Calu3 (cell line): ENCODE measurements at regions of chr13 and their contacts with region 1.

Region 1: DNA sequence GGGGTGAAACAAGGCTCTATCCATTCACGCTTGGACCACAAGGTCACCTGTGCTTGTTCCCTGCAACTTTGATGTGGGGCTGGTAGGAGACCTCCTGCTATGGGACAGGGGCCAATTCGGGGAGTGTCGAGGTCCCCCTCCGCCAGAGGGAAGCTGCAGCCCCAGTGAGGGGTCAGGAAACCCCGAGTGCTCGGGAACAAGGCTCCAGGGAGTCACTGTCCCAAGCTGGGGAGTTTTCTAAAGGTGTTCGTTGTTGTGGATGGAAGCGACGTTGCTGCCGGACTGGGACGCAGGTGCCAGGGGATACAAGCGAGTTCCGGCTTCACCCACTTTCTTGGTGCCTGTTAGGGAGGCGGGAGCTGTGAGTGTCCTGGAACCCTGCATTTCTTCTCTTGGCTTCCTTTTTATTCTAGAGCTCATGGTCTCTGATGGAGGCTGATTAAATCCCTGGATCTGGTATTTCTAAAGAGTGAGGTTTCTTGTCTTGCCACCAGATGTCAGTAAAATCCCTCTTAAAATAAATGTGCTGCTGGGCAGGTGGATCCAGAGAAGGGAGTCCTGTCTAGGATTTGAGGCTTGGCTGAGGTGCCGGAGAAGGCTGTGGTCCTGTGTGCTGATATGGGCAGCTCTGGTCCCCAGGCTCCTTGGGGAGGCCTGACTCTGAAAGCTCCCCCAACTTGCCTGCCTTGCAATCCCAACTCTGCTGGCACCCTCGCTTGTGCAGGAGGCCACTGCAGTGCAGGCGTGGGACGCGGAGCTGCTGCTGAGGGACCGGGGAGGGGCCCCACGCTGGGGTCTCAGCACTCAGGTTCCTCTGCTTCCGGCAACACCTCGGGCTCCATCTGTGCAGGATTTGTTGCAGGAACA is 153.9 kb downstream of the TEX29 start:
- DNase-seq: no peak
- H3K4me3 Mint-ChIP-seq: no peak overlapping the region
- H3K27ac Mint-ChIP-seq: no peak overlapping the region
- H3K4me1 Mint-ChIP-seq: no peaks in the 10 kb centered on the region
- H3K27me3 Mint-ChIP-seq: peaks cover 14% of the 10 kb centered on the region
- CTCF ChIP-seq: no peak

Region 2: DNA sequence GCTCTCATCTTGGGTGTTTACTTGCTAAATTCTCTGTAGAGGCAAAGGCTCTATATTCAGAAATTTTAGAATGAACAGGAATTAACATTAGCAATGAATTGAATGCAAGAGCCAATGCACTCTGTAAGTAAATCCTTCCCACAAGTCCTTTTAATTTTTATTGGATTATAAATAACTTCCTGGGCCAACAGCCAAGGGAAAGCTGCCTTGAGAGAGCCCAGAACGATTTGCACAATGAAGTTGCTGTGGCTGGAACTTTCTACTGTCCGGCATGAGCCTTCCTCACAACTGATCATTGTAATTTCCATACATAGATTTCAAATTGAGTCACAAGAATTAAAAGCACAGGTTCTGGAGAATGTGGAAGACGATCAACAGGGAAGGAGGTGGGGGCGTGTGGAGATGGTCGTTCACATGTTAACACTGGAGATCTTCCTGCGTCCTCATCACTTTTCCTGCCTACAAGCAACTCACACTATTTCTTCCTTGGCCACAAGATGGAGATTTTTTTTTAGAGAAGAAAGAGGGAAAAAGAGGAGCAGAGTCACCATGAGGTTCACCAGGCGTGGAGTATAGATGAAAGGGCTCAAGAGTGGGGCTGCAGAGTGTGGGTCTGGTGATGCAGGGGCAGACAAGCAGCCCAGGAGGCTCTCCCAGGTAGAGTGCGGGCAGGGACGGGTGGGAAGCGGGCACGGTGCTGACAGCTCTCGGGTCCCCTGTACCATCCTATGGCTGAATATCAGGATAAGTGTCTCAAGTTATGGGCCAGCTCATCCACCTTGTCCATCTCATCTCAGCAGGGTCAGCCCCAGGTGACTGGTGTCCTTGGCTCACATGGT is 703.3 kb after region 1 on chr13:
- CTCF ChIA-PET with region 1: no interaction called
- intact Hi-C with region 1: no loop called
- DNase-seq: no peak
- H3K4me3 Mint-ChIP-seq: no peak overlapping the region
- H3K27ac Mint-ChIP-seq: no peak overlapping the region
- H3K4me1 Mint-ChIP-seq: no peaks in the 10 kb centered on the region
- H3K27me3 Mint-ChIP-seq: no peaks in the 10 kb centered on the region
- CTCF ChIP-seq: no peak

Region 3: GRCh38 chr13:112443995-112444860 is 969.9 kb after region 1 on chr13:
- CTCF ChIA-PET with region 1: interaction called, 3 read pairs
- intact Hi-C with region 1: loop called (anchors 2 kb)
- DNase-seq: peak; percentile 63
- H3K4me3 Mint-ChIP-seq: no peak overlapping the region
- H3K27ac Mint-ChIP-seq: no peak overlapping the region
- H3K4me1 Mint-ChIP-seq: no peaks in the 10 kb centered on the region
- H3K27me3 Mint-ChIP-seq: peaks cover 27% of the 10 kb centered on the region
- CTCF ChIP-seq: peak; percentile 45

Region 4: DNA sequence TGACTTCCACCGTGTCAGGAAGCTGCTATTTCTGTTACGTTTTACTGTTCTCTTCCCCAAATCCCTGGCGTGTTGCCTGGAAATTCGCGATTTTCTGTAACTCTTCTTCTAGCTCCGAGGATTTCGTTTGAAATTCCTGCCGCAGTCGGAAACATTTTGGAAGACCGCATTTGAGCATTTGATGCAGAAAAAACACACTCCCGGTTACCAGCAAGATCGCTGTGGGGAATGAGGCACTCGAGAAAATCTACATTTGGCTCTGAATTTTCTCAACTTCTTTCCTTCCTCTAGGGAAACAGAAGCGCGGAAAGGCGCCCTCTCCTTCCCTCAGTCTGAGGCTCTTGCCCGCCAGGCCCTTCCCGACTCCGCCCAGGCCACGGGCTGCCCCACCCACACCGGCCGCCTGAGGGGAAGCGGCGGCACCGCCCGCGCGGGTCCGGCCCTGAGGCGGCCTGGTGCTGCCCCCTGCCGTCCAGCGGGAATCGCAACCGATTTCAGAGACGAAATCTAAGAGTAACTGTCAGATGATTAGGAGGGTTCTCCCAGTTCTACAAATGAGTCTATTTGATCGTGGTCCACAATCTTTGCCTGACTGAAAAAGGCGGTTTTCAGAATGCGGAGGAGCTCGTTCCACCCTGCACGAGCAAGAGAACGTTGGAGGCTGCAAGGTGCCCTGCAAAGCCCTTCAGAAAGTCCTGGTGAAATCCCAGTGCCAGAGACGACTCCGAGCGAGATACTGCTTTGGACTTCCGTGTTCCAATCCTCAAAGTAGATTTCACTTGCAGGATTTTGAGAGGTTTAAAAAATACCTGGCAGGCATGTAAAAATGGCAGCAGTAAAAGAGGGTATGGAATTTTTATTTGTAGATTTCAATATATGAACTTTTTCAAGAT is 1132.0 kb after region 1 on chr13:
- CTCF ChIA-PET with region 1: no interaction called
- intact Hi-C with region 1: loop called (anchors 10 kb)
- DNase-seq: peak; percentile 82
- H3K4me3 Mint-ChIP-seq: peak overlapping the region; percentile 44
- H3K27ac Mint-ChIP-seq: no peak overlapping the region
- H3K4me1 Mint-ChIP-seq: no peaks in the 10 kb centered on the region
- H3K27me3 Mint-ChIP-seq: no peaks in the 10 kb centered on the region
- CTCF ChIP-seq: peak; percentile 38